Endothelial cell of umbilical vein (primary cell): ENCODE measurements at regions of chr2 and their contacts with region 1.

Region 1: GRCh38 chr2:96208143-96209010 is at the start of gene STARD7:
- DNase-seq: peak; percentile 97
- H3K4me3 ChIP-seq: peak within 1 kb of the TSS; percentile 84 to 99 (median 98)
- H3K27ac ChIP-seq: peak within 1 kb of the TSS; percentile 87
- H3K4me1 ChIP-seq: peaks cover 36% of the 10 kb centered on the region
- H3K27me3 ChIP-seq: no peaks in the 10 kb centered on the region
- CTCF ChIP-seq: peak; percentile 4 to 19
- POLR2A ChIP-seq: peak; percentile 89
- total RNA-seq, gene STARD7: 107 and 132 TPM in 2 replicates

Region 2: DNA sequence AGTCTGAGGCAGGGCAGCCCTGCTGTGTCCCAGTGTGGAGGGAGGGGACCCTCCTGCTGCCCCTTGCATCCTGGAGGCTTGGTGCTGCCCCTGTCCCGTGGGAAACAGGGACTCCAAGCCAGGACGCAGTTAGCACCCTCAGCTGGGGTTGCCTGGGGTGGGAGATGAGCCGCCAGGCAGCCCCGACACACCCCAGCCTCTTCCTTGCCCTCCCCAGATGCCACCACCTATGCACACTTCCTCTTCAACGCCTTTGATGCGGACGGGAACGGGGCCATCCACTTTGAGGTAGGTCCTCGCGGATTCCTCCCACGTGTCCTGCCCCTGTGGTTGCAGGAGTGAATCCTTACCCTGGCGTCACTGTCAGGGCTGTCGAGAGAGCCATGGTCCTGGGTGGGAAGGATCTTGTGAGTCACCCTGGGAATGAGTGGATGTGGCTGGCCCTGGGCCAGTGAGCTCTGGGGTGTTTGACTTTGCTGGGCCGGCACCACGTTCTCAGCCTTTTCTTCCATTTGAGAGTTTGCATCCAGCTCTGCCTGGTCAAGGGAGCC is 833.4 kb before region 1 on chr2:
- CTCF ChIA-PET with region 1: no interaction called
- POLR2A ChIA-PET with region 1: no interaction called
- dilution Hi-C with region 1: no loop called
- intact Hi-C with region 1: no loop called
- DNase-seq: no peak
- H3K4me3 ChIP-seq: no peak overlapping the region
- H3K27ac ChIP-seq: no peak overlapping the region
- H3K4me1 ChIP-seq: no peaks in the 10 kb centered on the region
- H3K27me3 ChIP-seq: no peaks in the 10 kb centered on the region
- CTCF ChIP-seq: no peak
- POLR2A ChIP-seq: no peak

Region 3: DNA sequence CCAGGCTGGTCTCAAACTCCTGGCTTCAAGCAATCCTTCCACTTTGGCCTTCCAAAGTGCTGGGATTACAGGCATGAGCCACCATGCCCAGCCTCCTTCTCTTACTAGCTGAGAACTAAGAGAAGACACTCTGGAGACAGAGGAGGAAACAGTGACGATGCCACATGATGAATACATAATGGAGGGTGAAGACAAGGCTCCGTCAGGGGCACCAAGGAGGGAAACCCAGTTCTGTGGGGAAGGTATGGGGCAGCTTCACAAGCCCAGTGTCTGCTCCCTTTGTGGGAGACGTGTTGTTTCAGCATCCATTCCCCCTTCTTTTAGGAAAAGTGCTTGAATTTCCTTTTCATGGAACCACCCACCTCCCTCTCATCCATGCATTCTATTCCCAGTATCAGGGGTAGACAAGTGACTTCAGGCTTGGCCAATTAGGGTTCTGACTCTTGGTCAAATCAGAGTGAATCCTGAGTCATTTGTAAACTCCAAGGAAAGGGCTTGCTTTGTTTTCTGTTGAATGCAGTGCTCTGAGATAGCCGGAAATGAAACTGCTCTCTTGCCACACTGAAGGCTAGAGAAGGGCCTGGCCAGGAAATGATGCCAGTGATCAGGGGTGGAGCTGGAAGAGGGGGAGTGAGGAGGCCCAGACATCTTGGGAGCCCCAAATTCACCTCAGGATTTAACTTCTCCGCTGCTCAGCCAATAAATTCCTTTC is 33.7 kb after region 1 on chr2:
- CTCF ChIA-PET with region 1: interaction called, 6 read pairs
- POLR2A ChIA-PET with region 1: interaction called, 3 read pairs
- dilution Hi-C with region 1: no loop called
- intact Hi-C with region 1: loop called (anchors 2 kb)
- DNase-seq: peak; percentile 76
- H3K4me3 ChIP-seq: no peak overlapping the region
- H3K27ac ChIP-seq: peak overlapping the region; percentile 71
- H3K4me1 ChIP-seq: peaks cover 31% of the 10 kb centered on the region
- H3K27me3 ChIP-seq: no peaks in the 10 kb centered on the region
- CTCF ChIP-seq: no peak
- POLR2A ChIP-seq: no peak

Region 4: DNA sequence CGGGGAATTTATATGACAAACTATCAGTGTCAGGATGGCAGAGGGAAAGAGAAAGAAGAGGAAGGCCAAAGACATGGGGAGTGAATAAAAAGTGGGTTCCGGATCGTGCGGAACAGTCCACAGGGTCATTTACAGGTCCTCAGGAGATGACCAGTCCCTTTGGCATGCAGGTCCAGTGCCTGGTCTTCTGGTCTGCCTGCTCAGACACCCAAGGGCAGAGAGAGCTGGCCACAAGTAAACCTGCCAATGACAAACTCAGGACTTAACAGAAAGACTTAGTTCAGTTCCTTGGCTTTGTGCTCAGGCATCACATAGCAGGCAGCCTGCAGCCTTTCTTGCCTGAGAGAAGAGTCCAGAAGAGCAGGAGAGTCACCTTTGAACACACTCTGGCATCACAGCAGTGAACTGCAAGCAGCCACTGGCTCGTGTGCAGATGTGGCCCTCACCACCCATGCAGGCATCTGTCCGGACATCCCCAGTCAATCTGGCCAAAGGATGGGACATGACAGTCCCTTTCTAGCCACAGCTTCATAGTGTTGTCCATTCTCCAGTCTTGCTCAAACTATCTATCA is 43.4 kb after region 1 on chr2:
- CTCF ChIA-PET with region 1: interaction called, 4 read pairs
- POLR2A ChIA-PET with region 1: interaction called, 3 read pairs
- dilution Hi-C with region 1: no loop called
- intact Hi-C with region 1: loop called (anchors 2 kb)
- DNase-seq: peak; percentile 96
- H3K4me3 ChIP-seq: no peak overlapping the region
- H3K27ac ChIP-seq: peak overlapping the region; percentile 28
- H3K4me1 ChIP-seq: peaks cover 39% of the 10 kb centered on the region
- H3K27me3 ChIP-seq: no peaks in the 10 kb centered on the region
- CTCF ChIP-seq: no peak
- POLR2A ChIP-seq: peak; percentile 27

Region 5: GRCh38 chr2:96260404-96261260 is 52.3 kb after region 1 on chr2:
- CTCF ChIA-PET with region 1: interaction called, 15 read pairs
- POLR2A ChIA-PET with region 1: interaction called, 6 read pairs
- dilution Hi-C with region 1: no loop called
- intact Hi-C with region 1: loop called (anchors 1 kb)
- DNase-seq: peak; percentile 94
- H3K4me3 ChIP-seq: no peak overlapping the region
- H3K27ac ChIP-seq: peak overlapping the region; percentile 76
- H3K4me1 ChIP-seq: peaks cover 47% of the 10 kb centered on the region
- H3K27me3 ChIP-seq: no peaks in the 10 kb centered on the region
- CTCF ChIP-seq: peak; percentile 42 to 65
- POLR2A ChIP-seq: no peak

Region 6: GRCh38 chr2:96336104-96336775 is 127.9 kb after region 1 on chr2:
- CTCF ChIA-PET with region 1: no interaction called
- POLR2A ChIA-PET with region 1: no interaction called
- dilution Hi-C with region 1: no loop called
- intact Hi-C with region 1: loop called (anchors 1 kb)
- DNase-seq: no peak
- H3K4me3 ChIP-seq: peak overlapping the region; percentile 75 to 90 (median 90)
- H3K27ac ChIP-seq: peak overlapping the region; percentile 50
- H3K4me1 ChIP-seq: peaks cover 15% of the 10 kb centered on the region
- H3K27me3 ChIP-seq: no peaks in the 10 kb centered on the region
- CTCF ChIP-seq: no peak
- POLR2A ChIP-seq: peak; percentile 63